ENCODE measurements at regions of chr11 and their contacts with region 1.

Region 1: GRCh38 chr11:63686921-63687320 is 5.6 kb downstream of the RTN3 start:
- DNase-seq: peak; percentile 32
- H3K4me3 ChIP-seq: no peak overlapping the region
- H3K27ac ChIP-seq: peak overlapping the region; percentile 84
- H3K4me1 ChIP-seq: peaks cover 70% of the 10 kb centered on the region
- H3K27me3 ChIP-seq: no peaks in the 10 kb centered on the region
- CTCF ChIP-seq: no peak

Region 2: GRCh38 chr11:63698976-63699733 is 12.2 kb after region 1 on chr11:
- CTCF ChIA-PET with region 1: no interaction called
- POLR2A ChIA-PET with region 1: interaction called, 12 read pairs
- intact Hi-C with region 1: no loop called
- DNase-seq: peak; percentile 56
- H3K4me3 ChIP-seq: no peak overlapping the region
- H3K27ac ChIP-seq: peak overlapping the region; percentile 31
- H3K4me1 ChIP-seq: peaks cover 21% of the 10 kb centered on the region
- H3K27me3 ChIP-seq: no peaks in the 10 kb centered on the region
- CTCF ChIP-seq: no peak

Region 3: GRCh38 chr11:64007629-64008282 is 320.8 kb after region 1 on chr11:
- CTCF ChIA-PET with region 1: no interaction called
- POLR2A ChIA-PET with region 1: no interaction called
- intact Hi-C with region 1: no loop called
- DNase-seq: peak; percentile 45
- H3K4me3 ChIP-seq: peak overlapping the region; percentile 22
- H3K27ac ChIP-seq: no peak overlapping the region
- H3K4me1 ChIP-seq: peaks cover 29% of the 10 kb centered on the region
- H3K27me3 ChIP-seq: no peaks in the 10 kb centered on the region
- CTCF ChIP-seq: no peak

Region 4: GRCh38 chr11:64767344-64768299 is 1080.7 kb after region 1 on chr11:
- CTCF ChIA-PET with region 1: no interaction called
- POLR2A ChIA-PET with region 1: no interaction called
- intact Hi-C with region 1: no loop called
- DNase-seq: peak; percentile 91
- H3K4me3 ChIP-seq: no peak overlapping the region
- H3K27ac ChIP-seq: peak overlapping the region; percentile 48
- H3K4me1 ChIP-seq: peaks cover 42% of the 10 kb centered on the region
- H3K27me3 ChIP-seq: no peaks in the 10 kb centered on the region
- CTCF ChIP-seq: peak; percentile 94

Measured in A673 (cell line).